A673 (cell line): ENCODE measurements at regions of chr7 and their contacts with region 1.

Region 1: DNA sequence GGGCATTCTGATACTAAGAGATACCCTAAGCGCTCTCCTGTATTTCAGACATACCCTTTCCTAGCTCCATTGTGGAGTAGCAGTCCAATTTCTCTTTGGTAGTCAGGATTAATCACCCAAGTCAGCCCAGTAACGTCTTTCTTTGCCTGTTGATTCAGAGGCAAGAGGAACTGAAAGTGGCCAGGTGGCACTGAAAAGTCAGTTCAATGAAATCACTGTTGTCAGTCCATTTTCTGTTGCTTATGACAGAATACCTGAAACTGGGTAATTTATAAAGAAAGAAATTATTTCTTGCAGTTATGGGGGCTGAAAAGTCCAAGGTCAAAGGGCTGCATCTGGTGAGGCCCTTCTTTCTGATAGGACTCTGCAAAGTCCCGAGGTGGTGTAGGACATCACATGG is 40.2 kb downstream of the ANKRD61 start:
- DNase-seq: no peak
- H3K4me3 ChIP-seq: no peak overlapping the region
- H3K27ac ChIP-seq: no peak overlapping the region
- H3K4me1 ChIP-seq: no peaks in the 10 kb centered on the region
- H3K27me3 ChIP-seq: no peaks in the 10 kb centered on the region
- CTCF ChIP-seq: no peak

Region 2: DNA sequence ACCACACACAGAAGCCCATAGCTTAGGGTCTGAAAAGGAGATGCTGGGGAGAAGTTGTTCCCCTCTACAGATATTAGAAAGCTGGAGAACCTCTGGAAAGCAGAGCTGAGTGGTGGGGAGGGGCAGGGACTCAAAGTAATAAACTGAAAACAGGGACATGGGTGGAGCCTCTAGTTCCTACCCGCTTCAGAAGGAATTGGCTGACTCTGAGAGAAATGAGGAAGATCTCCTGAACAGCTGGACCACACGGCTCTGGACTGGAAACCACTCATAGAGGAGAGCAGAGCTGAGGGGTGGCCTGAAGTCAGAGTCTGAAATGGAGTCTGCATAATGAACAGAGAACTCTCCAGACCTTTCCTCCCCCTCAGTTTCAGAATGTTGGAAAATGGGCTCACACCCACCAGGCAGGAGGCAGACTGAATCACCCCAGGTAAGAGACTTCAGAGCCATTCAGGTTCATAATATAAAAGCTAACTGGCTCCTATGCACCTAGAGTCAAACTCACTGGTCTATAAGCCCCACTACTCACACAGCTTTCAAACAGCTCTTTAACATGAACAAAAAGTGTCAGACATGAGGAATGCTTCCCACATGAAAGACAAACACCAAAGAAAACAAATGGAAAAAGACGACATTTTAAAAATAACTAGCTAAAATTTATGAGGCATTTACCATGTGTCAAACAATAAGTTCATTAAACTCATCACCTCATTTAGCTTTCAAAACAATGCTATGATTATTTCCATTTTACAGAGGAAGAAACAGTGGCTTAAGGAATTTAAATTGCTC is 358.1 kb before region 1 on chr7:
- CTCF ChIA-PET with region 1: no interaction called
- POLR2A ChIA-PET with region 1: no interaction called
- intact Hi-C with region 1: no loop called
- DNase-seq: no peak
- H3K4me3 ChIP-seq: no peak overlapping the region
- H3K27ac ChIP-seq: no peak overlapping the region
- H3K4me1 ChIP-seq: peaks cover 6% of the 10 kb centered on the region
- H3K27me3 ChIP-seq: no peaks in the 10 kb centered on the region
- CTCF ChIP-seq: no peak

Region 3: GRCh38 chr7:6475433-6476186 is 404.2 kb after region 1 on chr7:
- CTCF ChIA-PET with region 1: interaction called, 10 read pairs
- POLR2A ChIA-PET with region 1: no interaction called
- intact Hi-C with region 1: no loop called
- DNase-seq: no peak
- H3K4me3 ChIP-seq: no peak overlapping the region
- H3K27ac ChIP-seq: no peak overlapping the region
- H3K4me1 ChIP-seq: no peaks in the 10 kb centered on the region
- H3K27me3 ChIP-seq: no peaks in the 10 kb centered on the region
- CTCF ChIP-seq: no peak